Adrenal gland (tissue), 19 donors: ENCODE measurements at regions of chr12 and their contacts with region 1.

Region 1: GRCh38 chr12:1795785-1796514 is 24.4 kb upstream of the LRTM2 start:
- DNase-seq: peak; percentile 93 to 96 (median 93)
- H3K4me3 ChIP-seq: peak overlapping the region in 2 of 4 donors; percentile 29 to 76
- H3K27ac ChIP-seq: peak overlapping the region in 4 of 5 donors; percentile 70 to 84 (median 77)
- H3K4me1 ChIP-seq: peaks cover 11 to 18% of the 10 kb centered on the region in 2 donors
- H3K27me3 ChIP-seq: no peaks in the 10 kb centered on the region
- CTCF ChIP-seq: peak; percentile 60 to 100 (median 90)
- POLR2A ChIP-seq: peak; percentile 7 to 54

Region 2: DNA sequence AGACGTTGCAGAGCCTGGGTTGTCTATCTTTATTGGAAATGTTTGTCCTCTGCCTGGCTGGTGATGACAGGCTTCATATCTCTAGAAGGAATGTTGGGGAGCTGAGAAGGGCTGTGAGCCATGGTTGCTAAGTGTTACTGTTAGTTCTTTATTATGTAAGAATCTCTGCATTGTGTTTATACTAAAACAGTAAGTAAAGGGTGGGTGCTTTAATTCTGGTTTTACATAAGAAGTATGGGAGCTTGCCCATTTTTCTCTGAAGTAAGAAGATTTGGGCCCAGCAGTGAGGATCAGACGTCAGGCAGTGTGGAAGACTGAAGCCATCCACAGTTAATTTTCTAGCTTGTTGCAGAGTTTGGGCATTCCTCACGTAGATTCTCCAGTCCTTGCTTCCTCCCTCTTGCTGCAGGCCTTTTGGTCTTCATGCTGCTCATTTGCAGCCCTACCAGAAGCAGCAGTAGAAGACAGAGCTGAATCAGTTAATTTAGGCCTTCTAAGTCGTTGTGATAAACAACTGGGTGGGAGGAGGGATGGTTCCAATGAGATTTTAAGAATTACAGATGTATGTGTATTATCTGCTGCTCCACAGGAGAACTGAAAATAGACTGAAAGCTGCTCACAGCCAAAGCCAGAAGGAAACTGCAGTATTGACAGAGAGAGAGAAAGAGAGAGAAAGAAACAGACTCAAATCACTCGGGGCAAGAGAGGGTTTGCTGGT is 145.5 kb before region 1 on chr12:
- intact Hi-C with region 1: loop called in 1 of 2 experiments (anchors 2 kb)
- DNase-seq: no peak
- H3K4me3 ChIP-seq: no peak overlapping the region
- H3K27ac ChIP-seq: peak overlapping the region in 3 of 5 donors; percentile 40 to 63 (median 51)
- H3K4me1 ChIP-seq: peaks cover 8 to 13% of the 10 kb centered on the region in 2 donors
- H3K27me3 ChIP-seq: no peaks in the 10 kb centered on the region
- CTCF ChIP-seq: no peak
- POLR2A ChIP-seq: no peak

Region 3: GRCh38 chr12:1907652-1908611 is 112.0 kb after region 1 on chr12:
- intact Hi-C with region 1: no loop called
- DNase-seq: peak in 3 of 7 donors; percentile 9 to 40 (median 11)
- H3K4me3 ChIP-seq: peak overlapping the region in 1 of 4 donors; percentile 6
- H3K27ac ChIP-seq: no peak overlapping the region
- H3K4me1 ChIP-seq: peaks cover 5% of the 10 kb centered on the region in 2 donors
- H3K27me3 ChIP-seq: no peaks in the 10 kb centered on the region
- CTCF ChIP-seq: no peak
- POLR2A ChIP-seq: no peak

Region 4: GRCh38 chr12:1939801-1940607 is 144.1 kb after region 1 on chr12:
- intact Hi-C with region 1: loop called (anchors 2 kb)
- DNase-seq: peak; percentile 84 to 96 (median 89)
- H3K4me3 ChIP-seq: no peak overlapping the region
- H3K27ac ChIP-seq: peak overlapping the region in 1 of 5 donors; percentile 12
- H3K4me1 ChIP-seq: peaks cover 14 to 19% of the 10 kb centered on the region in 2 donors
- H3K27me3 ChIP-seq: no peaks in the 10 kb centered on the region
- CTCF ChIP-seq: peak; percentile 89 to 97 (median 96)
- POLR2A ChIP-seq: no peak

Region 5: GRCh38 chr12:2034633-2035430 is 238.9 kb after region 1 on chr12:
- intact Hi-C with region 1: loop called (anchors 5 kb)
- DNase-seq: peak; percentile 80 to 92 (median 91)
- H3K4me3 ChIP-seq: peak overlapping the region in 2 of 4 donors; percentile 2 to 46
- H3K27ac ChIP-seq: no peak overlapping the region
- H3K4me1 ChIP-seq: peaks cover 0 to 5% of the 10 kb centered on the region in 2 donors
- H3K27me3 ChIP-seq: no peaks in the 10 kb centered on the region
- CTCF ChIP-seq: peak; percentile 43 to 98 (median 84)
- POLR2A ChIP-seq: no peak

Region 6: GRCh38 chr12:2284857-2285256 is 488.9 kb after region 1 on chr12:
- intact Hi-C with region 1: loop called in 1 of 2 experiments (anchors 5 kb)
- DNase-seq: peak; percentile 53 to 83 (median 63)
- H3K4me3 ChIP-seq: no peak overlapping the region
- H3K27ac ChIP-seq: peak overlapping the region in 1 of 5 donors; percentile 83
- H3K4me1 ChIP-seq: peaks cover 0 to 10% of the 10 kb centered on the region in 2 donors
- H3K27me3 ChIP-seq: no peaks in the 10 kb centered on the region
- CTCF ChIP-seq: peak; percentile 23 to 61 (median 48)
- POLR2A ChIP-seq: no peak

Region 7: DNA sequence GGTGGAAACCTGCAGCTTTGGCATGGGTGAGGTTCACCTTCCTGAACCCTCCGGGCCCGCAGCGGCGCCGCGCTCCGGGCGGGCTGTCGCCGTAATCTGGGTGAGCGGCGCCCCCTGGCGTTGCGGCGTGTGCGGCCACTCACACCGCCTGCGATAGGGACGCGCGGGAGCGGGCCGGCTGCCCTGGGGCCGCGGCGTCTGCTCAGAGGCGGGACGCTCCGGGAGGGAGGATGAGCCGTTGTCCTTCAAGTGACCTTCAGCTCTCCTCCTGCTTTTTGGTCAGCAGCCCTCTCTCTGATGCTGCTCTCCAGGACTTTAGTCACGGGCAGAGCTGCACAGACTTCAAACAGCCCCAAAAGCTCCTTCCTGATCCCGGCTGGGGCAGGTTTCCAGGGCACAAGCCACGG is 787.1 kb after region 1 on chr12:
- intact Hi-C with region 1: loop called in 1 of 2 experiments (anchors 10 kb)
- DNase-seq: peak; percentile 34 to 78 (median 68)
- H3K4me3 ChIP-seq: no peak overlapping the region
- H3K27ac ChIP-seq: no peak overlapping the region
- H3K4me1 ChIP-seq: peaks cover 0 to 8% of the 10 kb centered on the region in 2 donors
- H3K27me3 ChIP-seq: no peaks in the 10 kb centered on the region
- CTCF ChIP-seq: peak; percentile 38 to 95 (median 75)
- POLR2A ChIP-seq: no peak